Heart left ventricle (tissue), 16 donors: ENCODE measurements at regions of chr9 and their contacts with region 1.

Region 1: GRCh38 chr9:121545875-121546423 is 46.3 kb upstream of the GGTA1 start:
- DNase-seq: peak; percentile 95 to 99 (median 98)
- ATAC-seq: peak; percentile 88 to 93 (median 92)
- H3K4me3 ChIP-seq: peak overlapping the region in 10 of 12 donors; percentile 15 to 48 (median 24)
- H3K27ac ChIP-seq: peak overlapping the region in 4 of 12 donors; percentile 32 to 62 (median 50)
- H3K4me1 ChIP-seq: peaks cover 0 to 25% (median 15%) of the 10 kb centered on the region in 12 donors
- H3K27me3 ChIP-seq: no peaks in the 10 kb centered on the region
- CTCF ChIP-seq: peak; percentile 91 to 98 (median 96)
- POLR2A ChIP-seq: peak in 1 of 2 donors; percentile 23

Region 2: DNA sequence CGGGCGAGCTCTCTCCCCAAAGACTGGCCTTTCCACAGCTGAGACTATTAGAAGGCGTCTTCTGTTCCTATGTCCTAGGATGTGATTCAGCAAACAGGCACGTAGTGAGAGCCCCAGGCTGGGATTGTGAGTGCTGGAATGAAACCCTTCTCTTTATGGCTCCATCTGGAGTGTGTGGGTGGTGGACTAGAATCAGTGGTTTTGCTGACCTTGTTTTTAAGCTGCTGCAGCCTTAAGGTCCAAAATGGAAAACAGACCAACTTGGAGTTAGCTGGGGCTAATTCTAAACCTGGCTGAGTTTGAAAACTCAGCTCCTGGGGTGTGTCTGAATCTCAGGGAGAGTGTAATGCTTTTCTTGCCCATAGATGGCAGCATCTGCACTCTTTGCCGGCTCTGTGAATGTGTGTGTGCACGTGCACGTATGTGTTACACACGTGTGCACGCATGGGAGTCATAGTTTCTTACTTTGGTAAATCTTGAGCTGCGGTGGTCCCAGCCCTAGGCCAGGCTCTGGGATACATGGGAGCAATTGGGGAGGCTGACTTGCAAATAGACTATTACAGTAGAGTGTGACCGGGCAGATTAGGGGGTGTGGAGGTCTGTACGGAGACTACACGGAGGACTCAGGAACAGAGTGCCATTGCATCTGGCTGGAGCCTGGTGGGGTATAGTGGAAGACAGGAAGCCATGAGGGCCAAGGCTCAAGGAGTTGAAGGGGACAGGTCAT is 267.3 kb before region 1 on chr9:
- intact Hi-C with region 1: no loop called
- DNase-seq: peak; percentile 75 to 82 (median 76)
- ATAC-seq: peak; percentile 52 to 72 (median 64)
- H3K4me3 ChIP-seq: peak overlapping the region in 1 of 12 donors; percentile 7
- H3K27ac ChIP-seq: peak overlapping the region; percentile 0 to 100 (median 96)
- H3K4me1 ChIP-seq: peaks cover 31 to 96% (median 69%) of the 10 kb centered on the region in 12 donors
- H3K27me3 ChIP-seq: no peaks in the 10 kb centered on the region
- CTCF ChIP-seq: peak; percentile 73 to 93 (median 86)
- POLR2A ChIP-seq: peak in 1 of 2 donors; percentile 35

Region 3: GRCh38 chr9:121598965-121599871 is 53.3 kb after region 1 on chr9:
- intact Hi-C with region 1: loop called in 6 of 10 experiments (anchors 5 kb)
- DNase-seq: peak; percentile 82 to 88 (median 83)
- ATAC-seq: peak; percentile 70 to 88 (median 83)
- H3K4me3 ChIP-seq: peak overlapping the region; percentile 57 to 78 (median 71)
- H3K27ac ChIP-seq: peak overlapping the region; percentile 79 to 98 (median 95)
- H3K4me1 ChIP-seq: peaks cover 4 to 51% (median 37%) of the 10 kb centered on the region in 12 donors
- H3K27me3 ChIP-seq: peaks cover 0 to 29% (median 0%) of the 10 kb centered on the region in 9 donors
- CTCF ChIP-seq: peak in 1 of 12 donors; percentile 13
- POLR2A ChIP-seq: peak; percentile 2 to 68

Region 4: GRCh38 chr9:121621113-121621449 is 75.1 kb after region 1 on chr9:
- intact Hi-C with region 1: loop called in 3 of 10 experiments (anchors 5 kb)
- DNase-seq: peak in 1 of 5 donors; percentile 26
- ATAC-seq: peak in 1 of 4 donors; percentile 6
- H3K4me3 ChIP-seq: no peak overlapping the region
- H3K27ac ChIP-seq: peak overlapping the region in 9 of 12 donors; percentile 13 to 84 (median 77)
- H3K4me1 ChIP-seq: peaks cover 3 to 78% (median 46%) of the 10 kb centered on the region in 12 donors
- H3K27me3 ChIP-seq: no peaks in the 10 kb centered on the region
- CTCF ChIP-seq: peak in 11 of 12 donors; percentile 13 to 62 (median 39)
- POLR2A ChIP-seq: no peak

Region 5: GRCh38 chr9:121679901-121680635 is 134.1 kb after region 1 on chr9:
- intact Hi-C with region 1: loop called in 9 of 10 experiments (anchors 2 to 10 kb)
- DNase-seq: peak in 2 of 5 donors; percentile 13 to 38
- ATAC-seq: no peak
- H3K4me3 ChIP-seq: no peak overlapping the region
- H3K27ac ChIP-seq: no peak overlapping the region
- H3K4me1 ChIP-seq: peaks cover 0 to 52% (median 28%) of the 10 kb centered on the region in 12 donors
- H3K27me3 ChIP-seq: no peaks in the 10 kb centered on the region
- CTCF ChIP-seq: no peak
- POLR2A ChIP-seq: no peak

Region 6: DNA sequence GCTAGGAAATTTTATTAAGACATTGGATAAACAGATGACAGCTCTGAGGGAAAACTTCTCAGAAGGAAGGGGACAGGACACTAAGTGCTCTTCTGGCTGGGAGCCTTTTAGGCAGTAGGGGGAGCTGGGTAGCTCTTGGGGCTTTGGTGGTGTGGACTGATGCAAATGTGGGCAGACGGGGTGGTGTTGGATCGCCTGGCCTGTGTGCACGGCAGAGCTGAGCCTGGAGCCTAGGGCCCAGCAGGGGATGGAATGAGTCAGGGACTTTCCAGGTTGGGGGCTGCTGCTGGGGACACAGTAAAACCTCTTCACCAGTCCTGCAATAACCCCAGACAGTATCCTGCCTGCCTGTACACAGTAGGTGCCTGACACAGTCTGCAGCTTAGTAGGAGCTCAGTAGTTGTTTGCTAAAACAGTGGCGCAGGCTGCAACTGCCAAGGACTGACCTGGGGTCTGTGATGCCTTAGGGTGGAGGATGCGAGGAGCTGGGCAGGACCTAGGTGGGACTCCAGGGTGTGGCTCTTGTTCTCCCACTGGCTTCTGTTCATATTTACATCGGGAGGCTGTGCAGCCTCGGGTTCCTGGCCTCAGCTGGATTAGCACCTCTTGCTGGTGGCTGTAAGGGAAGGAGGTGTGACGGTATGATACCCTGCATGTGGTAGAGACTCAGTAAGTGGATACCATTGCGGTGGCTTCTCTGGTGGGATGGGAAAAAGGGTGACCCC is 189.3 kb after region 1 on chr9:
- intact Hi-C with region 1: loop called in 4 of 10 experiments (anchors 5 to 10 kb)
- DNase-seq: no peak
- ATAC-seq: peak in 3 of 4 donors; percentile 4 to 19 (median 14)
- H3K4me3 ChIP-seq: peak overlapping the region in 9 of 12 donors; percentile 16 to 70 (median 59)
- H3K27ac ChIP-seq: peak overlapping the region; percentile 66 to 99 (median 90)
- H3K4me1 ChIP-seq: peaks cover 21 to 95% (median 84%) of the 10 kb centered on the region in 12 donors
- H3K27me3 ChIP-seq: peaks cover 0 to 10% (median 0%) of the 10 kb centered on the region in 9 donors
- CTCF ChIP-seq: peak; percentile 15 to 53 (median 29)
- POLR2A ChIP-seq: no peak

Region 7: GRCh38 chr9:121852651-121853616 is 307.0 kb after region 1 on chr9:
- intact Hi-C with region 1: loop called in 1 of 10 experiments (anchors 10 kb)
- DNase-seq: peak; percentile 38 to 77 (median 66)
- ATAC-seq: peak; percentile 40 to 87 (median 71)
- H3K4me3 ChIP-seq: no peak overlapping the region
- H3K27ac ChIP-seq: peak overlapping the region in 9 of 12 donors; percentile 1 to 65 (median 50)
- H3K4me1 ChIP-seq: peaks cover 0 to 18% (median 11%) of the 10 kb centered on the region in 12 donors
- H3K27me3 ChIP-seq: no peaks in the 10 kb centered on the region
- CTCF ChIP-seq: no peak
- POLR2A ChIP-seq: no peak

Region 8: GRCh38 chr9:122092611-122093506 is 546.9 kb after region 1 on chr9 and contains the start of gene TTLL11:
- intact Hi-C with region 1: loop called in 3 of 10 experiments (anchors 10 kb)
- DNase-seq: peak; percentile 98 to 99 (median 98)
- ATAC-seq: peak; percentile 95 to 99 (median 96)
- H3K4me3 ChIP-seq: peak within 1 kb of the TSS; percentile 65 to 98 (median 92)
- H3K27ac ChIP-seq: peak within 1 kb of the TSS; percentile 42 to 91 (median 74)
- H3K4me1 ChIP-seq: peaks cover 10 to 54% (median 28%) of the 10 kb centered on the region in 12 donors
- H3K27me3 ChIP-seq: no peaks in the 10 kb centered on the region
- CTCF ChIP-seq: no peak
- POLR2A ChIP-seq: peak in 1 of 2 donors; percentile 76
- total RNA-seq, gene TTLL11: 4.3 to 10.9 (median 7.9) TPM